ENCODE measurements at regions of chr10 and their contacts with region 1.

Region 1: GRCh38 chr10:95246579-95247051 is 44.2 kb downstream of the PDLIM1 start:
- DNase-seq: peak; percentile 62
- ATAC-seq: peak; percentile 76
- H3K4me3 ChIP-seq: no peak overlapping the region
- H3K27ac ChIP-seq: peak overlapping the region; percentile 21
- H3K4me1 ChIP-seq: peaks cover 19% of the 10 kb centered on the region
- H3K27me3 ChIP-seq: no peaks in the 10 kb centered on the region
- CTCF ChIP-seq: peak; percentile 83
- EP300 ChIP-seq: no peak
- POLR2A ChIP-seq: no peak
- RAD21 ChIP-seq: peak; percentile 84

Region 2: DNA sequence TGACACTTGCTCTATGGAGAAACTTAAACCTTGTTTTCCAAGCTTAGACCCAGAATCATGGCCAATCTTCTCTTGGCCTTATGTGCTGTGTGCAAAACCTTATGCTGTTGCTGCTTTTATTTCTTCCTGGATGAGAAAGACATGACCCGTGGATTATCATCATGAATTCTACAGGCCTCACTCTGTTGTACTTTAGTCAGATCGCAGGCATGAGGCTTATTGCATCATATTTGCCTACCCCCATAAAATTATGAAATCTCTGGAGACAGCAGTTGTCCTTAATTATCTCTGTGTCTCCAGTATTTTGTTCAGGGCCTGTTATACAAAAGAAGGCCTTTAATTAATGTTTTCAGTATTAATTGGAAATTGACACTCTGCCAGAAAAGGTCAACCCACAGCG is 1181.3 kb before region 1 on chr10:
- CTCF ChIA-PET with region 1: no interaction called
- POLR2A ChIA-PET with region 1: no interaction called
- in situ Hi-C with region 1: no loop called
- intact Hi-C with region 1: no loop called
- DNase-seq: no peak
- ATAC-seq: no peak
- H3K4me3 ChIP-seq: no peak overlapping the region
- H3K27ac ChIP-seq: no peak overlapping the region
- H3K4me1 ChIP-seq: no peaks in the 10 kb centered on the region
- H3K27me3 ChIP-seq: no peaks in the 10 kb centered on the region
- CTCF ChIP-seq: no peak
- EP300 ChIP-seq: no peak
- POLR2A ChIP-seq: no peak
- RAD21 ChIP-seq: no peak

Region 3: DNA sequence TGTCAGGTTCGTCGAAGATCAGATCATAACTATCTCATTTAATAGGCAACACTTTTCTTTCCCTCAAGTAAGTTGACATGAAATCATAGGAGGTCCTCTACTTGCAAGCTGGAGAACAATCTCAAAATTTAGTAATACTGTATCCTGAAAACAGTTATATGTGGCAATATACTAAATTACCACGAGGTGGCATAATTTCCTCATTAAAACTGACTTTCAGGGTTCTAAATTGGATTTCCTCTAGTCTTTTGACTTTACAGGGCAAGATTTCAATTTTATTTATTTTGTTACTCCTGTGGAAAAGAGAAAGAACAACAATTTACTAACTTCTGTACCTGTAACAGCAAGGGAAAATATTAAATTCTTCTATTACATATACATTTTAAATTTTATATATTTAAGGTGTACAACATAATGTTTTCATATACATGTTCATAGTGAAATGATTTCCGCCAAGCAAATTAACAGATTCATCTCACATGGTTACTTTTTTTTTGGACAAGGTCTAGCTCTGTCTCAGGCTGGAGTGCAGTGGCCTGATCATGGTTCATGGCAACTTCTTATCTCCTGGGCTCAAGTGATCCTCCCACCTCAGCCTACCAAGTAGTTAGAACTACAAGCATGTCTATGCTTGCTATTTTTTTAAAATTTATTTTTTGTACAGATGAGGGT is 616.5 kb before region 1 on chr10:
- CTCF ChIA-PET with region 1: no interaction called
- POLR2A ChIA-PET with region 1: no interaction called
- in situ Hi-C with region 1: loop called (anchors 25 kb)
- intact Hi-C with region 1: no loop called
- DNase-seq: peak; percentile 21
- ATAC-seq: no peak
- H3K4me3 ChIP-seq: no peak overlapping the region
- H3K27ac ChIP-seq: no peak overlapping the region
- H3K4me1 ChIP-seq: no peaks in the 10 kb centered on the region
- H3K27me3 ChIP-seq: no peaks in the 10 kb centered on the region
- CTCF ChIP-seq: peak; percentile 60
- EP300 ChIP-seq: no peak
- POLR2A ChIP-seq: no peak
- RAD21 ChIP-seq: peak; percentile 50; the same call in 1 of the 2 replicates

Region 4: DNA sequence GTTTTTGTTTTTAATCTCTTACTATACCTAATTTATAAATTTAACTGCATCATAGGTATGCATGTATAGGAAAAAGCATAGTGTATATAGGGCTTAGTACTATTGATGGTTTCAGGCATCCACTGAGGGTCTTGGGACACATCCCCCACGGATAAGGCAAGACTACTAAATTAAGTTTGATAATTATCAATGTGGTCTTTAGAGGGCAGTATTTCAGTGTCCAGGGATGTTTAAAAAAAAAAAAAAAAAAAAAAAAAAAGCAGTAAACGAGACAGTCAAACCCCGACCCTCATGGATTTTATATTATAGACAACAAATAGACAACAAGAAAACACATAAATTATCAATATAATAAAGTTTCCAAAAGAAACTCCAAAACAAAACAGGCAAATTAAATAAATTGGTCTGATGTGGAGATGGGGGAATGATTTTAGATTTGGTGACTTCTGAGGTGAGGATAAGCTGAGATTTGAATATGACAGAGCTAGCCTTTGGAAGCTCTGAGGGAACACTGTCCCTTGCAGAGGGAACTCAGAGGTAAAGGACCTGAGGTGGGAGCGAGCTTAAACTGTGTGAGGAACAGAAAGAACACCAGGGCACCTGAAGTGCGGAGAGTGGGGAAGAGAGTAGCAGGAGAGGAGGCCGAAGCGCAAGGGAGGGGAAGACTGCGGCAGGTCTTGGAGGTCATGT is 37.8 kb before region 1 on chr10:
- CTCF ChIA-PET with region 1: no interaction called
- POLR2A ChIA-PET with region 1: no interaction called
- in situ Hi-C with region 1: no loop called
- intact Hi-C with region 1: loop called (anchors 1 kb)
- DNase-seq: no peak
- ATAC-seq: no peak
- H3K4me3 ChIP-seq: no peak overlapping the region
- H3K27ac ChIP-seq: no peak overlapping the region
- H3K4me1 ChIP-seq: no peaks in the 10 kb centered on the region
- H3K27me3 ChIP-seq: no peaks in the 10 kb centered on the region
- CTCF ChIP-seq: no peak
- EP300 ChIP-seq: no peak
- POLR2A ChIP-seq: no peak
- RAD21 ChIP-seq: no peak

Region 5: GRCh38 chr10:95456516-95456915 is 209.9 kb after region 1 on chr10:
- CTCF ChIA-PET with region 1: no interaction called
- POLR2A ChIA-PET with region 1: no interaction called
- in situ Hi-C with region 1: no loop called
- intact Hi-C with region 1: no loop called
- DNase-seq: no peak
- ATAC-seq: no peak
- H3K4me3 ChIP-seq: 0 out of 6 replicates have a peak overlapping the region, but pooled peaks of 1 of the 3 experiments have one; percentile 50
- H3K27ac ChIP-seq: peak overlapping the region; percentile 95
- H3K4me1 ChIP-seq: peaks cover 96% of the 10 kb centered on the region
- H3K27me3 ChIP-seq: no peaks in the 10 kb centered on the region
- CTCF ChIP-seq: no peak
- EP300 ChIP-seq: no peak
- POLR2A ChIP-seq: no peak
- RAD21 ChIP-seq: no peak

Measured in HepG2 (cell line).